ENCODE measurements at regions of chr7 and their contacts with region 1.

Region 1: DNA sequence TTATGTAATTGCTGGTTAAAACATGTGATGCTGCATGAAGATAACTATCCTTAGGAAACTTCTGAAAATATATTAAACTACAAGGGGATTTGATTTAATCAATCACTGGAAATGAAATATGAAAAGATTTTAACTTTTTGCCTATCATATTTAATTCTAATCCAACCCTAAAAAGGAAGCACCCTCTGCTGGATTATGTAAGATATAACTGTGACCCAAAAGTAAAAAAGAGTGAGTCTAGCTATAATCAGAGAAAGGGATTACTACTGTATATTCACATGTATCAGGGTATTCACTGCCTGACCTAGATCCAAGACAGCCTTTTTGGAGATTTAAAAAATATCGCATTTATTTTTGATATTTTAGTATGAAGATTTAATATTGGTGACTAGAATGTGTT is 295.5 kb downstream of the MDFIC start:
- DNase-seq: no peak
- ATAC-seq: no peak
- H3K4me3 ChIP-seq: no peak overlapping the region
- H3K27ac ChIP-seq: no peak overlapping the region
- H3K4me1 ChIP-seq: peaks cover 0 to 6% (median 0%) of the 10 kb centered on the region in 12 donors
- H3K27me3 ChIP-seq: no peaks in the 10 kb centered on the region
- CTCF ChIP-seq: peak in 11 of 12 donors; percentile 18 to 59 (median 34)
- POLR2A ChIP-seq: no peak

Region 2: GRCh38 chr7:114988755-114989375 is 228.5 kb before region 1 on chr7:
- intact Hi-C with region 1: loop called in 1 of 10 experiments (anchors 10 kb)
- DNase-seq: peak; percentile 56 to 81 (median 62)
- ATAC-seq: peak in 3 of 4 donors; percentile 79 to 92 (median 91)
- H3K4me3 ChIP-seq: no peak overlapping the region
- H3K27ac ChIP-seq: peak overlapping the region; percentile 6 to 78 (median 66)
- H3K4me1 ChIP-seq: peaks cover 0 to 59% (median 36%) of the 10 kb centered on the region in 12 donors
- H3K27me3 ChIP-seq: no peaks in the 10 kb centered on the region
- CTCF ChIP-seq: no peak
- POLR2A ChIP-seq: no peak

Region 3: GRCh38 chr7:115116773-115117715 is 100.3 kb before region 1 on chr7:
- intact Hi-C with region 1: loop called in 1 of 10 experiments (anchors 10 kb)
- DNase-seq: no peak
- ATAC-seq: no peak
- H3K4me3 ChIP-seq: no peak overlapping the region
- H3K27ac ChIP-seq: no peak overlapping the region
- H3K4me1 ChIP-seq: peaks cover 0 to under 1% (median 0%) of the 10 kb centered on the region in 12 donors
- H3K27me3 ChIP-seq: no peaks in the 10 kb centered on the region
- CTCF ChIP-seq: no peak
- POLR2A ChIP-seq: no peak